HEK293 (cell line): ENCODE measurements at regions of chr9 and their contacts with region 1.

Region 1: DNA sequence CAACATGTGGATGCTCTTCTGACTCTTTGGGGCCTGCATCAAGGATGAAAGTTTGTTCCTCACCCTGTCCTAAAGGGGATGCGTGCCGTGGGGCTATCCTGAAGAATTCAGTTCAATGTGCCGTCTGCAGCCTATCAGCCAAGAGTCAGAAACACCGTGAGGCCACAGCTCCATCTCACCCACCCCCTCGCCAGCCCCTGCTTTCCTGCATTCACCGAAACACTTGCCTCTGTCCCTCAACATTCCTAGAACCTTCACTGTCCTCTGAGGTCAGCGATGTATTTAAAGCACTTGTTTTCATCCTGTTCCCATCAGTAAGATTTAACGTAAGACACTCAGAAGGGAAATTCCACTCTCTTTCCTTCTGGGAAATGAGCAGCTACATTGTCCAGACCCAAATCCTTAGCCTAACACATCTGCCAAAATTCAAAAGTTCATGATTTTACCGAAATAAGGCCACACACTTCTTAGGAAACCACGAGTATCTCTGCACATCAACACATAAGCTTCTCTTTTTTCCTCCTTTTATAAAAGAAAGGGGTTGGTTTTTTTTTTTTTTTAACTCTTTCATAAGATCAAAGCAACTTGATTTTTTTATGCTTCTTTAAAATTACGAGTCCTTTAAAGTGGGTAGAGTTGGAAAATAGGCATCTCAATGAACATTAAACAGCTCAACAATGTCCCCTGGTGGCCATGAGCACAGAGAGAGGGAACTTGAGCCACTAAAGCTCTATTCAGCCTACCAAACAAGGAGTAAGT is 100.7 kb downstream of the SUSD1 start:
- H3K4me3 ChIP-seq: no peak overlapping the region
- H3K27ac ChIP-seq: no peak overlapping the region
- H3K4me1 ChIP-seq: no peaks in the 10 kb centered on the region
- CTCF ChIP-seq: peak; percentile 34; the same call in 1 of the 2 replicates

Region 2: DNA sequence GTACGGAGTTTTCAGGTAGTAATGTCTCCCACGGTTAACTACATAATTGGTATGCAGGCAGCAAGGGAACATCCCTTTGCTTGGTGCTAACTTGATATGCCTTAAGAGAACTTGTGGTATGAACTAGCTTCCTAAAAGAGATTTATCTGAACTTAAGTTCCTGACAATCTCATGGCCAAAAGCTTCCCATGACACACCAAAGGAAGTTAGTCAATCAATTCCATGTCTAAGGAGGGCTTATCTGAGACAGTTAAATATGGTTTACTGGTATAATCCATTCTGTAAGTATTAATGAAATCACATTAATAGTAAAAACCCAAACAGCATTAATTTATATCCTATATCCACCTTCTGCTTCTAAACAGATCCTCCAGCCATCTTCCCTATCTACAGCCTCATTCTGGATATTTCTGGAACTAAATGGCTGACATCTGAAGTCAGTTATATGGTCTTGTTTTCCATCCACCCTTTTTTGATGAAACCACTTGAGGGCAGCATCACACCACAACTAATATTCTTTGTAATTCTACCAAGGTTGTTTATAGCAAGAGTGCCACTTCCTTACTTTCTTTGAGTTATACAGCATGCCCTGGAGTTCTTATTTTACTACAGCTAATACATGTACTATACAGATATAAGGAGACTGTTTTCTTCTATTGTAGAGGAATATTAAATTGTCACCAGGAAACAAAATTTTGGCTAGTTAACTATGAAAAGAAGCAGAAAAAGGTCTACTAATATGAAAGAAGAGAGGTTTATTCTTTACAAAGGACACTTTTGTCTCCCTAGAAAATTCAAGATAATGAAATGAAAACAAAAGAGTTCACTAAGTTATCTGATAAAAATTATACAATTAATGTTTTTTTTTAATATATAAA is 314.4 kb before region 1 on chr9:
- CTCF ChIA-PET with region 1: interaction called, 111 read pairs
- POLR2A ChIA-PET with region 1: no interaction called
- H3K4me3 ChIP-seq: no peak overlapping the region
- H3K27ac ChIP-seq: no peak overlapping the region
- H3K4me1 ChIP-seq: no peaks in the 10 kb centered on the region
- CTCF ChIP-seq: peak; percentile 36; the same call in 1 of the 2 replicates

Region 3: DNA sequence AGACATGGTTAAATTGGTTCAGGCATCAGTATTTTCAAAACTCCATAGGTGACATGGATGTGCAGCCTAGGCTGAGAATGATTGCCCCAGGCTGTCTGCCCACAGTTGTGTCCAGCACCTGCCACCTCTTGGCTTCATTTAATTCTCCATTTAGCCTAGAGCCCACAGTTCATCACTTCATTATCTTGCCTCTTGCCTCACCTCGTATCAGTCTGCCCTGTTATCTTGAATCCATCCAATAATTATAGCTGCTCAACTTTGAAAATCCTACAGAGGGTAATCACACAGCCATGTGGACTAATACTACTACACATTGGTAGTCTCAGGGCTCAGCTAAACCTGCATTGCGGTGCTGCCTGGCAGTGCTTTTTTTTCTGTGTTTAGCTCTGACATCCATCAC is 170.4 kb before region 1 on chr9:
- CTCF ChIA-PET with region 1: interaction called, 11 read pairs
- POLR2A ChIA-PET with region 1: no interaction called
- H3K4me3 ChIP-seq: no peak overlapping the region
- H3K27ac ChIP-seq: no peak overlapping the region
- H3K4me1 ChIP-seq: peaks cover 10% of the 10 kb centered on the region
- CTCF ChIP-seq: no peak

Region 4: DNA sequence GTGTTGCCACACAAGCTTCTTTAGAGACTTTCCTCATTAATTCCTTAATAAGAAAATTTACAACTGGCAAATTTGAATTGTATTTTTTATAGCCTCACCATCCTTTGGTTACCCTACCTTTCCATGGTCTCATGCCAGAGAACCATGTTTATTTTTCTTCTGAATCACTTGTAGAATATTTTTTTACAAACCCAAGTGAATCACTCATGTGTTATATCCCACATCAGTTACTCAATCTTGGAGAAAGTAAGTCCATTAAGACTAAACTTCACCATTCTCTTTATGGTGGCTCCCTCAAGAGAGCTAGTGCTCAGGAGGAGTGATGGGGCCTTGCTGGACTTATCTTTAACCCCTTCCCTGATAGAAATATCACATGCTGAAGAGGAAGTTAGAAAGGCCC is 28.2 kb before region 1 on chr9:
- CTCF ChIA-PET with region 1: interaction called, 11 read pairs
- POLR2A ChIA-PET with region 1: interaction called, 5 read pairs
- H3K4me3 ChIP-seq: no peak overlapping the region
- H3K27ac ChIP-seq: no peak overlapping the region
- H3K4me1 ChIP-seq: no peaks in the 10 kb centered on the region
- CTCF ChIP-seq: no peak

Region 5: GRCh38 chr9:112097712-112098688 is 23.6 kb after region 1 on chr9:
- CTCF ChIA-PET with region 1: interaction called, 12 read pairs
- POLR2A ChIA-PET with region 1: no interaction called
- H3K4me3 ChIP-seq: no peak overlapping the region
- H3K27ac ChIP-seq: no peak overlapping the region
- H3K4me1 ChIP-seq: no peaks in the 10 kb centered on the region
- CTCF ChIP-seq: 0 out of 2 replicates have a peak, but pooled peaks have one; percentile 11